Activated B cell treated with CpG ODN at 0.5 μM for 24 hours (primary cell): ENCODE measurements at regions of chr19 and their contacts with region 1.

Region 1: DNA sequence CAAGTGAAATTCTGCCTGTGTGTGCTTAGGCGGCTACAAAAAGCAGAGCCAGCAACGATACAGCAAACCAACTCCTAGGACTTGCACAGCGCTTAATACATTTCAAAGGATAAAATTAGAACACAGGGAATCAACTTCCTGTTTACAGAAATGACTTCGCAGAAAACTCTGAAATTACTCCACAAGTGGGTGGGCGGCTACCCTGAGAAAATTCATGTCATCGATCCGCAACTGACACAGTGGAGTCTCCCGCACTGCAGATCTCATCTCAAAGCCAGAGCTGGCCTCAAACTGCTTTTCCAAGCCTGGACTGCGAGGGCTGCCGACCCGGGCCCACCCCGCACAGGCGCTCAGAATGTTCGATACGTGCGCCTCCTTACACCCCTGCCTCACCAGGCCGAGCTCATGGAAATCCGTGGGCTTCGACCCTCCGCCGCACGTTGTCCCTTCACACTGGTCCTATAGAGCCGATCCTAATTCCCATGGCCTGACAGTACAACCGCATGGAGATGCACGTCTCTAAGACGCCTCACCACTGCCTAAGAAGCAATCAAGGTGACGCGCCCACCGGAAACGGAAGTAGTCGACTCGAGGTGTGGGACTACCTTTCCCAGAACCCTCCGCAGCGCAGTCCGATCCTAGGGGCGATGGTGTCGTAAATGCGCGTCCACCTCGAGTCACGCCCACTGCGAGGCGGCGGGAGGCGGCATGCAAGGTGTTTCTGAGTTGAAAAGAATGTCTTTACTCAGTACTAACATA is at the start of gene ZNF229:
- DNase-seq: peak; percentile 69
- ATAC-seq: peak; percentile 99
- H3K4me3 Mint-ChIP-seq: peak within 1 kb of the TSS; percentile 87
- H3K27ac Mint-ChIP-seq: peak within 1 kb of the TSS; percentile 79
- H3K4me1 Mint-ChIP-seq: peaks cover 12% of the 10 kb centered on the region
- H3K27me3 Mint-ChIP-seq: peaks cover 21% of the 10 kb centered on the region
- CTCF ChIP-seq: no peak
- total RNA-seq, gene ZNF229: 3.1 and 3.7 TPM in 2 replicates

Region 2: GRCh38 chr19:44304659-44305193 is 143.4 kb before region 1 on chr19 and contains the start of gene ZNF235:
- CTCF ChIA-PET with region 1: no interaction called
- POLR2A ChIA-PET with region 1: no interaction called
- intact Hi-C with region 1: loop called (anchors 2 kb)
- DNase-seq: peak; percentile 61
- ATAC-seq: peak; percentile 97
- H3K4me3 Mint-ChIP-seq: peak within 1 kb of the TSS; percentile 96
- H3K27ac Mint-ChIP-seq: peak within 1 kb of the TSS; percentile 76
- H3K4me1 Mint-ChIP-seq: peaks cover 20% of the 10 kb centered on the region
- H3K27me3 Mint-ChIP-seq: peaks cover 7% of the 10 kb centered on the region
- CTCF ChIP-seq: no peak
- total RNA-seq, gene ZNF235: 11.6 and 14.5 TPM in 2 replicates

Region 3: DNA sequence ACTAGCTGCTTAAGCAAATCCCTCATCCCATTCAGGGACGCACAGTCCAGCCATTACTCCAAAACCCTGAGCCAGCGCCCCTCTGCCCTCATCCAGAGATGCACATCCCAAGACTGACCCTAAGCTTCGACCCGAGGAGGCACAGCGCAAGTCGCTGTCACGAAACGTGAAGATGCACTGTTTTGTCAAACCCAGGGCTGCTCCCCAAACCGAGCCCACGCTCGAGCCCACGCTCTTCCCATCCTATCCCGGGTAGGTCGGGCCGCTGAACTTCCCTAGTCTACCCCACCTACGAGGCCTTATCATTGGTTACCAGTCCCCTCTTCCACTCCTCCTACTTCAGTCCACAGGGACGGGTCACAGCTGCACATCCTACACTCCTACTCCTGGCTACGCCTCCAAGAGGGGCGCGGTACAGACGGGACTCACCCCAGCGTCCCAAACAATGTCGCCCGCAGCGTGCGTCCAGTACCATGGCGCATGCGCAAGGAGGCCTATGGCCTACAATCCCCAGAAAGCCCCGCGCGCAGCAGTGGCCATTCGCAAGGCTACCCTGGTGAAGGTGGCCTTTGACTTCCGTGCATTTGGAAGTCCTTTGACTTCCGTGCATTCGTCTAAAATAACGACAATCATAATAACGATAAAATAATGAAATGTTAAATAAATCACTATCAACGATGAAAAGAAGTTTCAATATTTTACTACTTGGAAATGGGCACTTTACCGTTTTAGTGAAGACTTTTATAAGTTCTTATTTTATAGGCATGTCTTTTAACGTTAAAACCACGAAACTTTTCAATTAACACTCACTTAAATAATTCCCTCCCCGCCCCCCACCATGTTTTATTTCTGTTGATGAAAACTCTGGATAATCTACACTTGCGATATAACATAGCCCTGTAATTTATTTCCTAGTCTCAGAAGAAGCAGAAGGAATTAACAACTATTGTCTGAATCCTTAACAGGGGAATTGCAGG is 46.7 kb before region 1 on chr19 and contains the start of gene ZNF285:
- CTCF ChIA-PET with region 1: no interaction called
- POLR2A ChIA-PET with region 1: no interaction called
- intact Hi-C with region 1: loop called (anchors 1 kb)
- DNase-seq: peak; percentile 75
- ATAC-seq: peak; percentile 97
- H3K4me3 Mint-ChIP-seq: peak within 1 kb of the TSS; percentile 88
- H3K27ac Mint-ChIP-seq: peak within 1 kb of the TSS; percentile 46
- H3K4me1 Mint-ChIP-seq: peaks cover 14% of the 10 kb centered on the region
- H3K27me3 Mint-ChIP-seq: peaks cover 14% of the 10 kb centered on the region
- CTCF ChIP-seq: no peak
- total RNA-seq, gene ZNF285: 4.5 TPM in 2 replicates